Activated T-helper 1 cell treated with anti-CD3 and anti-CD28 coated beads, Interleukin-12 subunit alpha, Interleukin-12 subunit beta, Interleukin-2, Interleukin-4 antibody, amounts not matched to agents 30 ng/mL and 10 ng/mL and 1 ng/mL, durations not matched to agents 14 hours and 24 hours and 36 hours (primary cell): ENCODE measurements at regions of chr17 and their contacts with region 1.

Region 1: GRCh38 chr17:50397111-50397918 is at the start of gene LRRC59:
- DNase-seq: peak; percentile 92
- H3K4me3 Mint-ChIP-seq: peak within 1 kb of the TSS; percentile 99
- H3K27ac Mint-ChIP-seq: peak within 1 kb of the TSS; percentile 96
- H3K4me1 Mint-ChIP-seq: peaks cover 31% of the 10 kb centered on the region
- H3K27me3 Mint-ChIP-seq: no peaks in the 10 kb centered on the region
- total RNA-seq, gene LRRC59: 113 and 116 TPM in 2 replicates

Region 2: DNA sequence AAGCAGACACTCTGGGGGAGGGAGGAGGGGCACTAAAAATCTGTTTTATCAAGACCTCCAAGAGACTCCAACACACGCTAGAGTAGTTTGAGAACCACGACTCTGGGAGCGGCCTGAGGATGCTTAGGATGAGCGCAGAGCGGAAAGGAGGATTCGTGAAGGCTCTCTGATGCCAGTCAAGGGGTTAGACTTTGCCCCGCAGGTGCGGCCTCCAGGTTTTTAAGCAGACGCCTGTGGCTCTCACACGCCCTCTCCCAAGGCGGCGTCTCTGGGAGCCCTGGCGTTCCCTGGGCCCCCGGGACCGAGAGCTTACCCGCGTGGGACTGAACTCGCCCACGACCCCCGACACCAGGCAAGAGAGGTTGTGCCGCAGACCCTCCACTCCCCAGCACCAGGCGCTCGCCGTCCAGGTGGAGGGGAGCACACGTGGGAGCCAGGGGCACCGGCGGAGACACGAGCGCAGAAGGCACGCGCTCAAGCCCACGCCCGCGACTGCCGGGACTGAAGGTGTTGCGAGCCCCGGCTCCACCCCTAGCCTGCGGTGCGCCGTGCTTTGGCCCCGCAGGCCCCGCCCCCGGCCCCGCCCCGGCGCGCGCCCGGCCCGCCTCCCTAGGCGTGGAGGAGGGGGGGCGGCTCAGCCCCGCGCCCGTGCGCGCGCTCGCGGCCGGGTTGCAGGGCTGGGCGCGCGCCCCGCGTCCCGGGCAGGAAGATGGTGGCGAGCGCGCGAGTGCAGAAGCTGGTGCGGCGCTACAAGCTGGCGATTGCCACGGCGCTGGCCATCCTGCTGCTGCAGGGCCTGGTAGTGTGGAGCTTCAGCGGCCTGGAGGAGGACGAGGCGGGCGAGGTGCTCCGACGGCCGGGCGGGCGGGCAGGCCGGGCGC is 51.6 kb before region 1 on chr17 and contains the start of gene XYLT2:
- intact Hi-C with region 1: loop called (anchors 1 kb)
- DNase-seq: peak; percentile 87
- H3K4me3 Mint-ChIP-seq: peak within 1 kb of the TSS; percentile 94
- H3K27ac Mint-ChIP-seq: peak within 1 kb of the TSS; percentile 95
- H3K4me1 Mint-ChIP-seq: peaks cover 39% of the 10 kb centered on the region
- H3K27me3 Mint-ChIP-seq: peaks cover 4% of the 10 kb centered on the region
- total RNA-seq, gene XYLT2: 63.0 and 63.9 TPM in 2 replicates

Region 3: GRCh38 chr17:50361561-50362480 is 35.5 kb before region 1 on chr17:
- intact Hi-C with region 1: loop called (anchors 1 kb)
- DNase-seq: peak; percentile 34
- H3K4me3 Mint-ChIP-seq: peak overlapping the region; percentile 3
- H3K27ac Mint-ChIP-seq: peak overlapping the region; percentile 86
- H3K4me1 Mint-ChIP-seq: peaks cover 9% of the 10 kb centered on the region
- H3K27me3 Mint-ChIP-seq: no peaks in the 10 kb centered on the region

Region 4: DNA sequence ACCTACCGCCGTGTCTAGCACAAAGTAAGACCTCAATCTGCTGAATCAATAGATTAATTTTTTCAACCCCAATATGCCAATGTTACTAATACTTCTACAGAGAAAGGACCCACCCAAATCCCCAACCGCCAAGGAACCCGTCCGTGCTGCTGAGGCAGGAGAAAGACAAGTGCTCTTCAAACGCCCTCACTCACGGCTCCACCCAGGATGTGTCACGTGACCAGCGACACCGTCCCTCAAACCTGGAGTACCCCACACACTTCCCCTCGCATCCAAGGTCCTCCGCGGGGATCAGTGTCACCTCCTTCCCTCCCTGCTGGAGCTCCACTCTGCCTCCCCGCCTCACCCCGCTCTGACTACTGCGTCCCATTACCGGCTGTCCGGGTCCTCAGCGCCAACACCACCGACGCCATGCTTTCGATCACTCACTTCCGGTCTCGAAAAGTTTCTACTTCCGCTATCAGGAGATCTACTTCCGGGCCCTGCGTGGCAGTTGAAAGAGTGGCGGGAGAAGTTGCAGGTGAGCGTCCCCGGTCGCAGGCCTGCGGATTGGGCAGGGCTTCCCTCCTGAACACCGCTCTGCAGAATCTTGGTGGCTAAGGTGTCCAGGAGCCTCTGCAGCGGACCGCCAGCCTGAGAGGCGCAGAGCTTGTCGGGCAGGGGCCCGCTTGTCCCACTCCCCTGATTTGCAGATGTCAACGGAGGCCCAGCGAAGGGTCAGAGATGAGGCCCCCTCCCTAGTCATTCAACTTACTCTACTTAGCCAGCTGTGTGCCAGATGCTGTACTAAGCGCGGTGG is 24.4 kb before region 1 on chr17 and contains the starts of genes EME1 and MRPL27:
- intact Hi-C with region 1: loop called (anchors 1 kb)
- DNase-seq: peak; percentile 83
- H3K4me3 Mint-ChIP-seq: peak within 1 kb of the TSS; percentile 98
- H3K27ac Mint-ChIP-seq: peak within 1 kb of the TSS; percentile 100
- H3K4me1 Mint-ChIP-seq: peaks cover 33% of the 10 kb centered on the region
- H3K27me3 Mint-ChIP-seq: no peaks in the 10 kb centered on the region
- total RNA-seq, gene EME1: 27.7 and 32.9 TPM in 2 replicates
- total RNA-seq, gene MRPL27: 73.4 and 78.7 TPM in 2 replicates

Region 5: GRCh38 chr17:50425682-50426471 is 28.6 kb after region 1 on chr17 and contains the start of gene ACSF2:
- intact Hi-C with region 1: loop called (anchors 1 kb)
- DNase-seq: peak; percentile 66
- H3K4me3 Mint-ChIP-seq: peak within 1 kb of the TSS; percentile 91
- H3K27ac Mint-ChIP-seq: peak within 1 kb of the TSS; percentile 72
- H3K4me1 Mint-ChIP-seq: peaks cover 35% of the 10 kb centered on the region
- H3K27me3 Mint-ChIP-seq: no peaks in the 10 kb centered on the region
- total RNA-seq, gene ACSF2: 8.8 and 11.3 TPM in 2 replicates

Region 6: DNA sequence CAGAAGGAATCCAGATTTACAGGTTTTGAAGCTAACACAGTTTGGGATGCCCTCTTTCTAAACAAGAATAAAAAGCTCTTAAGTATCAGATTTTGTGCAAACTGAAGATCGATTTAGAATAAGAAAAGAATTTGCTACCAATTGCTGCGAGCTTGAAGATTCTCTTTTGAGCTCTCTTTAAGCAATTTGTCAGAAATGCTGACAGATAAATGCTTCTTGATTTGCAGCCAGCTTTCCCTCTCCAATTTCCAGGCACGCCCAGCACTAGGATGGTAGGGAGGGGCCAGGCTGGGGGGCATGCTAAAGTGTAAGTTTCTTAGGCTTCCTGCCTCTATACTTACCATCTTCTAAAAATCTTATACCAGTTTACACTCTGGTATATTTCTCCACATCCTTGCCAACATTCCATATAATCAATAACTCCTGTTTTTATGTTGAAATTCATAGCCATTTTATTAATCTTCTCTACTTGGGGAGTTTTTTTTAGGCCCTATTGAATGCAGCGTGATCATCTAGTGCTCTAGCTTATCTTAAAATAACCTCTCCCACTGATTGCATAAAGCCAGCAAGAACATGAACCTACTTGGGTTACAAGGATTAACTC is 46.2 kb after region 1 on chr17:
- intact Hi-C with region 1: no loop called
- DNase-seq: no peak
- H3K4me3 Mint-ChIP-seq: no peak overlapping the region
- H3K27ac Mint-ChIP-seq: no peak overlapping the region
- H3K4me1 Mint-ChIP-seq: no peaks in the 10 kb centered on the region
- H3K27me3 Mint-ChIP-seq: no peaks in the 10 kb centered on the region

Region 7: GRCh38 chr17:50707289-50708049 is 310.2 kb after region 1 on chr17 and contains the start of gene ANKRD40:
- intact Hi-C with region 1: loop called (anchors 5 kb)
- DNase-seq: peak; percentile 90
- H3K4me3 Mint-ChIP-seq: peak within 1 kb of the TSS; percentile 95
- H3K27ac Mint-ChIP-seq: peak within 1 kb of the TSS; percentile 97
- H3K4me1 Mint-ChIP-seq: peaks cover 40% of the 10 kb centered on the region
- H3K27me3 Mint-ChIP-seq: peaks cover 3% of the 10 kb centered on the region
- total RNA-seq, gene ANKRD40: 47.0 and 50.3 TPM in 2 replicates